Right lobe of liver (tissue), 6 donors: ENCODE measurements at regions of chr17 and their contacts with region 1.

Region 1: DNA sequence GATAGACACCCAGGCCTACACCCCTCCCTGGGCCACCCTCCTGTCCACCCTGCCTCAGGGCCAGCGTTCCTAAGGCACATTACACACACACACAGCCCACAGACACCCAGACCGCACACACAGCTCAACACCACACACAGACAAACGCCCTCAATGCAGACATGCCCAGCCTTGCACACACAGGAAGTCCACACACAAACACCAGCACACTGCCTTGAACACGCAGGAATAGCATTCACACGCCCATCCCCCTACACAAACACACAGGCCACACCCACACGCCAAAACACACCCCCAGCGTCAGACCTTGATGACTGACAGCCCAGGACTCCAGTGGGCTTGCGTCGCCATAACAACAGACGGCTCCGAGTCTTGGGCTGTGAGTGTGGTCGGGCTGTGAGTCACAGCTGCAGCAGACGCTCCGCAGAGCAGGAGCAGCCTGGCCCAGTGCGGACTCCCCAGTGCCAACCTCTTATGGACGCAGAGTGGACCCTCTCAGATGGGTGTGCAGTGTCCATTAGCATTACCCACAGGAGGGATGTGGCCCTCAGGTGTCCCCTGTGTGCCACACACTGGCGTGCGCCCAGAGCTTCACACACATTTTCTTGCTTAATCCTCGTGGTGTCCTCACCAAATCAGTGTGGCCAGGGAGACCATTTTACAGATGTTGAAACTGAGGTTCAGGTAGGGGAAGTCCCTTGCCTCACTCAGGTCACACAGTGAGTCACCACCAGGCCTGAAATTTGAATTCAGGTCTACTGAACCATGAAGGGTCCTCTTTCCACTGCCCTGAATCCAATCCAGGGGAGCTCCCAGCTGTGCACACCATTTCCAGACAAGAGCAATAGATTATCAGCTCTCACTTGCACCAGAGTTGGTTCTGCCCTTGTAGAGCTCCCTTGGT is 17.8 kb upstream of the RAI1 start:
- DNase-seq: no peak
- ATAC-seq: peak; percentile 23 to 45 (median 38)
- H3K4me3 ChIP-seq: no peak overlapping the region
- H3K27ac ChIP-seq: no peak overlapping the region
- H3K4me1 ChIP-seq: no peaks in the 10 kb centered on the region
- H3K27me3 ChIP-seq: no peaks in the 10 kb centered on the region
- CTCF ChIP-seq: no peak
- POLR2A ChIP-seq: no peak

Region 2: DNA sequence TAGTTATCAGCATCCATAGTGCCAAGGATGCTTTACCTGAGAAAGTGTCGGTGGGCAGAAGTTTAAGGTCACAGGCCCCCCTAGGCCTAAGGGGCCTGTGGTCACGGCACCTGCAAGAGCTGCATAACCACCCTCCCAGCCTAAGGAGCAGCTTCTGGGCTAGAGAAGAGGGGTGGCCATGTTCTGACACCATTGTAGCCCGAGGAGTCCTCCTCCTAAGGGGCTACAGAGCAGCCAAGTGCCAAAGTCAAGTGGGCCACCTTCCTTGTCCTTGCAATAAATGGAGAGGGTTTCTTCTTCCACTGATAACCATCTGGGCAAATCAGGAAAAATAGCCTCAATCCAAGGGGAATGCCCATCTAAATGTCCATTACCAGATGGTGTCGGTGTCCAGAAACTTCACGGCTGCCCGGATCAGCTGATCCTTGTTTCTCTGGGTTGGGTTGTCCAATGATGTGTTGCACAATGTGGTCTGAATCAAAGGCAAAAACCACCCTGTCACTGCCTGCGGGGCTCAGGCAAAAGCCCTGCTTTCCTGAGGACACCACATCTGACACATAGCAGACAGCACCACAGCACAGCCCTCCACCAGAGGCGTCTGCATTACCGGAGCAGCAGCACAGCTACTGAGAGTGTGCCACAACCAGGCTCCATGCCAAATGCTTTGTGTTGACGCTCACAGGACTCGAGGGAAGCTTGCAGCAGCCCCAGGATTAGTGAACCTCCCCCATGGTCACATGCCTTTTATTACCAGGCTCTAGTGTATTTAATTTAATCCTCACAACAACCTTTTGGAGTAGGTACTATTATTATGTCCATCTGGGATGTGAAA is 362.7 kb after region 1 on chr17:
- intact Hi-C with region 1: loop called in 1 of 2 experiments (anchors 10 kb)
- DNase-seq: peak in 2 of 3 donors; percentile 55 to 66
- ATAC-seq: peak; percentile 45 to 76 (median 60)
- H3K4me3 ChIP-seq: no peak overlapping the region
- H3K27ac ChIP-seq: no peak overlapping the region
- H3K4me1 ChIP-seq: peaks cover 0 to 17% (median 3%) of the 10 kb centered on the region in 4 donors
- H3K27me3 ChIP-seq: no peaks in the 10 kb centered on the region
- CTCF ChIP-seq: no peak
- POLR2A ChIP-seq: no peak